Sigmoid colon (tissue), 7 donors: ENCODE measurements at regions of chr15 and their contacts with region 1.

Region 1: GRCh38 chr15:83653639-83654378 is at the start of gene ADAMTSL3:
- DNase-seq: peak; percentile 92
- H3K4me3 ChIP-seq: peak within 1 kb of the TSS; percentile 63 to 80 (median 69)
- H3K27ac ChIP-seq: peak within 1 kb of the TSS; percentile 82 to 87 (median 86)
- H3K4me1 ChIP-seq: peaks cover 0 to 49% (median 44%) of the 10 kb centered on the region in 4 donors
- H3K27me3 ChIP-seq: no peaks in the 10 kb centered on the region
- CTCF ChIP-seq: no peak
- EP300 ChIP-seq: no peak
- POLR2A ChIP-seq: no peak
- total RNA-seq, gene ADAMTSL3: 29.2 to 40.7 (median 37.6) TPM

Region 2: DNA sequence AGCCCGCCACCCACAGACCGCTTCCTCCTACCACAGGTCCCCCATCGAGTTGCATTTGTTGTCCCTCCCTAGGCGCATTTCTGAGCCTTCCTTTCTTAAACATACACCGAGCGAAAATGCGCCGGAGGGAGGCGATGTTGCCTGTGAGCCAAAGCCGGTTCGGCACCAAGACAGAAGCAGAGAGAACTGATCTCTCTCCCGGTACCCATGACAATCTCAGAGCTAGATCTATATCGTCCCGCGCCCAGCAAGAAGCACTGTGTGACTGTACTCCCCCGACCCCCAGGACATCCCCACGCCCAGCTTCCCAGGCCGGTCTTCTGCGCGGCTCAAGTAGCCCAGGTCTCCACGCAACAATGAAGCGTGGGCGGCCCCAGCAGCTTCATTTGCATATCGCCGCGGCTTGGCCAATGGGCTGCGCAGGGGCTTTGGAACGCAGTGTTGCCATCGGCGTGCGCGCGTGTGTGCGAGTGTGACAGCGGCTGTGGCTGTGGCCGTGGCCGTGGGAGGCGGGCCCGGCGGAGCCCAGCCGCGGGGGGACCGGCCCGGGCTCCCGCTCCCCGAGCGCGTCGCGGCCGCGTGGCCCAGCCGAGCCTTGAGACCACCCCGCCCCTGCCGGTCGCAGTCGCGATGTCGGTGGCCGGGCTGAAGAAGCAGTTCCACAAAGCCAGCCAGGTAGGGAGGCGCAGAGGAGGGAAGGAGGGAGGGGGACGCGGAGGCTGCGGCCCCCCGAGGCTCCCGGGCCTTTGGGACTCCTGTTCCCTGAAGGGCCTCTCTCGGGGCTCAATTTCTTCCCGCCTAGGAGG is 206.7 kb before region 1 on chr15 and contains the start of gene SH3GL3:
- intact Hi-C with region 1: loop called (anchors 10 kb)
- DNase-seq: peak; percentile 91
- H3K4me3 ChIP-seq: peak within 1 kb of the TSS; percentile 39 to 64 (median 52)
- H3K27ac ChIP-seq: peak within 1 kb of the TSS in 2 of 4 donors; percentile 41 to 57
- H3K4me1 ChIP-seq: peaks cover 0 to 14% (median 8%) of the 10 kb centered on the region in 4 donors
- H3K27me3 ChIP-seq: peaks cover 0 to 6% (median 0%) of the 10 kb centered on the region in 3 donors
- CTCF ChIP-seq: peak in 1 of 4 experiments; percentile 23
- EP300 ChIP-seq: no peak
- POLR2A ChIP-seq: no peak
- total RNA-seq, gene SH3GL3: 0.54 to 0.99 (median 0.71) TPM in 3 of 4 donors, not detected in the other

Region 3: GRCh38 chr15:83685916-83686332 is 32.1 kb after region 1 on chr15:
- intact Hi-C with region 1: loop called (anchors 2 kb)
- DNase-seq: peak; percentile 93
- H3K4me3 ChIP-seq: peak overlapping the region; percentile 7 to 42 (median 35)
- H3K27ac ChIP-seq: peak overlapping the region; percentile 56 to 84 (median 81)
- H3K4me1 ChIP-seq: peaks cover 0 to 72% (median 49%) of the 10 kb centered on the region in 4 donors
- H3K27me3 ChIP-seq: no peaks in the 10 kb centered on the region
- CTCF ChIP-seq: no peak
- EP300 ChIP-seq: peak in 1 of 4 donors; percentile 40
- POLR2A ChIP-seq: no peak

Region 4: GRCh38 chr15:83837945-83838571 is 184.2 kb after region 1 on chr15:
- intact Hi-C with region 1: no loop called
- DNase-seq: no peak
- H3K4me3 ChIP-seq: no peak overlapping the region
- H3K27ac ChIP-seq: no peak overlapping the region
- H3K4me1 ChIP-seq: peaks cover 0 to 11% (median 8%) of the 10 kb centered on the region in 4 donors
- H3K27me3 ChIP-seq: no peaks in the 10 kb centered on the region
- CTCF ChIP-seq: peak in 1 of 4 experiments; percentile 30
- EP300 ChIP-seq: no peak
- POLR2A ChIP-seq: no peak

Region 5: DNA sequence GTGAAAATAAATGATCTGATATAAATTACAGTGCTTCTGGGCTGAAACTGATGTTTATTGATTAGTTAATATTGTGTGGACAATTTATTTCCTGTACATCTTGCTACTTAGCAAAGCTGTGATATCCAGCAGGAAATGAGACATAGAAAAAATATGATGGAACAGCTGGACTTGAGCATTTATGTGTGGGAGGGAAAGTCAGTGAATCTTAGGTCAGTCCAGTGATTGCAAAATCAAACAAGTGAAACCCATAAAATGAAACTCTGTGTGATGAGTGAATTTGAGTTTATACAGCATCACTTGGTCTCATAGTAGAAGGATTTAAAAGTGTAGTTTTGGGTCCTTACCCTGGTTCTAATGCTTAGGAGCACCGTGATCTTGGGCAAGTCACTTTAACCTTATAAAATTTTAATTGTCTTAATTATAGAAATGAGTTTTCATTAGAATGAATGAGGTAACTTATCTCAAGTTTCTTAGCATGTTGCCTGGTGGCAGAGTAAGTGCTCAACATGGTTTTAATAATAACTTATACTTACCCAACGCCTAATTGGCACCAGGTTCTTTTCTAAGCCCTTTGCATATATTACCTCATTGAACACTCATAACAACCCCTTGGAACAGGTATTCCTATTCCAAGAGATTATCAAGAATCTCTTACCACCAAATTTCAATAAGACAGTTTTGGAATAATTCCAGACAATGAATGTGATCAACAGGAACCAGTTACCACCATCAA is 194.7 kb after region 1 on chr15:
- intact Hi-C with region 1: loop called (anchors 5 kb)
- DNase-seq: no peak
- H3K4me3 ChIP-seq: no peak overlapping the region
- H3K27ac ChIP-seq: peak overlapping the region; percentile 54 to 76 (median 66)
- H3K4me1 ChIP-seq: peaks cover 0 to 83% (median 60%) of the 10 kb centered on the region in 4 donors
- H3K27me3 ChIP-seq: no peaks in the 10 kb centered on the region
- CTCF ChIP-seq: no peak
- EP300 ChIP-seq: no peak
- POLR2A ChIP-seq: no peak

Region 6: GRCh38 chr15:84023636-84024035 is 369.8 kb after region 1 on chr15:
- intact Hi-C with region 1: loop called (anchors 5 kb)
- DNase-seq: no peak
- H3K4me3 ChIP-seq: no peak overlapping the region
- H3K27ac ChIP-seq: no peak overlapping the region
- H3K4me1 ChIP-seq: no peaks in the 10 kb centered on the region
- H3K27me3 ChIP-seq: no peaks in the 10 kb centered on the region
- CTCF ChIP-seq: peak; percentile 14 to 48 (median 42)
- EP300 ChIP-seq: no peak
- POLR2A ChIP-seq: no peak